HepG2 (cell line): ENCODE measurements at regions of chr17 and their contacts with region 1.

Region 1: DNA sequence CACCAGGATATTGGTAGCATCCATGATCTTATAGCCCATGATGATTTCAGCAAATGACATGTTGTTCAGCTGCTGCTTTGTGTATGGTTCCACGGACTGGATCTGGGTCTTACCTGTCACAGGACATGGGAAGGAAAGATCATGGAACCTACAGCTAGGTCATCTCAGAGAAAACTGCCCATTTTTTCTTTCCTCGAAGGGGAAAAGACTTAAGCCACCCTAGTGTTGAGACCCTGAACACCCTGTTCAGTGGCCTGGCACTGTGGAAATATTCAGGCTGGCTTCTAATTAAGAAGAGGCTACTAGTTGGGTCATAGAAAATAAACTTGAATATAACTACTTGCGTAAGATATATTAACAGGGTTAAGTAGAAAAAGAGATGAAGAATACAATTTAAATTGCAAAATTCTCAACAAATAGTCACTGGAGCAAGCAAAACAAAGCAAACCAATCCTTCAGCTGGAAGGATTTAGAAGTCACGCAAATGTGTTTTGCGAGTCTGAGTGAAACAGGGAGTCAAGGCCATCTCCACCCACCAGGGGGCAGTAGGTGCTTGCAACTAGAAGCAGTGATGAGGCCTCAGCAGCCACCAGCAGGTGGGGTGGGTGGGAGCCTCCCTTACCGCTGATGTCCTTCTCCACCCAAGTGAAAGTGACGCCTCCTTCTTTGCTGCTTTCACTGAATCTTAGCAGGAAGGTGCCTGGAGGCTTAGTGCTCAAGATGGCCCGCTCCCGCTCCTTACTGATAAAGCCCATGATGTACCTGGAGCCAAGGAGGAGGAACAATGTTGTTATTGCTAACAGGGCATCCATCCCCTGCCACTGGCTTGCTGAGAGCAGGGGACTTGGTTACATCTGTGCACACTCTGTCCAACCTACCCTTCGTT is 34.3 kb downstream of the STAT5A start:
- DNase-seq: peak; percentile 90
- ATAC-seq: peak; percentile 97
- H3K4me3 ChIP-seq: no peak overlapping the region
- H3K27ac ChIP-seq: no peak overlapping the region
- H3K4me1 ChIP-seq: peaks cover 6% of the 10 kb centered on the region
- H3K27me3 ChIP-seq: no peaks in the 10 kb centered on the region
- CTCF ChIP-seq: peak; percentile 100
- EP300 ChIP-seq: 0 out of 4 replicates have a peak, but pooled peaks of 1 of the 2 experiments have one; percentile 27
- POLR2A ChIP-seq: no peak
- RAD21 ChIP-seq: peak; percentile 100

Region 2: DNA sequence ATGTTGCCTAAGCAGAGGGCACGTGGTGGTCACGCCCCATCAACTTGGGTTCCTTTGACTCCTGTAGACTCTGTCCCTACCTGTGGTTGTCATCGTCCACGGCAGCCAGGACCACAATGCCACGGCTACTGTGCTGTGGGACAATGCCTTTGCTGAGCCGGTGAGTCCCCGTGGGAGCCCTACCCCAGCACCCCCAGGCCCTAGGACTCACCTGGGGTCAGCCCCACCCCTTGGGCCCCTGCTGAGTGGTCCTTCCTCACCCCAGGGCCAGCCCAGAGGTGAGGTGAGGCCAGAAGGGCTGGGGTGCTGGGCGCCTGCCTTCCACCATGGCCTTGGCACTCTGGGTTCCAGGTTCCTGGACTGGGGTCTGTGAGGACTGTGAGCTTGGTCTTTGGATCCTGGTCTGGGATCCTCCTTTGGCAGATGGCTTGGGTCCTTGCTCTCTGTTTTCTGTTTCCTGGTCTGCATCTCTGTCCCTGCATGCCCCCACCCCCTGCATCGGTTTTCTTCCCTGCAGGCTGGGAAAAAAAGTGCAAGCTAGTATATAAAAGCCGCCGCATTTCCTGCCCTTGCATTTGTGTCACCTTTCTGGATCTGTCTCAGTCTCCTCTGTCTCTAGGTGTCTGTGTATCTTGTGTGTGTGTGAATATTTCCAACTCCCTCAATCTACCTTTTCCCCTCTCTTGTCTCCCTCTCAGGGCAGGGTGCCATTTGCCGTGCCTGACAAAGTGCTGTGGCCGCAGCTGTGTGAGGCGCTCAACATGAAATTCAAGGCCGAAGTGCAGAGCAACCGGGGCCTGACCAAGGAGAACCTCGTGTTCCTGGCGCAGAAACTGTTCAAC is 16.9 kb before region 1 on chr17:
- CTCF ChIA-PET with region 1: no interaction called
- POLR2A ChIA-PET with region 1: no interaction called
- in situ Hi-C with region 1: no loop called
- intact Hi-C with region 1: no loop called
- DNase-seq: no peak
- ATAC-seq: no peak
- H3K4me3 ChIP-seq: no peak overlapping the region
- H3K27ac ChIP-seq: no peak overlapping the region
- H3K4me1 ChIP-seq: peaks cover 63% of the 10 kb centered on the region
- H3K27me3 ChIP-seq: no peaks in the 10 kb centered on the region
- CTCF ChIP-seq: no peak
- EP300 ChIP-seq: no peak
- POLR2A ChIP-seq: no peak
- RAD21 ChIP-seq: no peak

Region 3: GRCh38 chr17:42337442-42337841 is 14.8 kb after region 1 on chr17:
- CTCF ChIA-PET with region 1: no interaction called
- POLR2A ChIA-PET with region 1: no interaction called
- in situ Hi-C with region 1: no loop called
- intact Hi-C with region 1: no loop called
- DNase-seq: no peak
- ATAC-seq: no peak
- H3K4me3 ChIP-seq: no peak overlapping the region
- H3K27ac ChIP-seq: no peak overlapping the region
- H3K4me1 ChIP-seq: no peaks in the 10 kb centered on the region
- H3K27me3 ChIP-seq: no peaks in the 10 kb centered on the region
- CTCF ChIP-seq: no peak
- EP300 ChIP-seq: no peak
- POLR2A ChIP-seq: no peak
- RAD21 ChIP-seq: no peak

Region 4: DNA sequence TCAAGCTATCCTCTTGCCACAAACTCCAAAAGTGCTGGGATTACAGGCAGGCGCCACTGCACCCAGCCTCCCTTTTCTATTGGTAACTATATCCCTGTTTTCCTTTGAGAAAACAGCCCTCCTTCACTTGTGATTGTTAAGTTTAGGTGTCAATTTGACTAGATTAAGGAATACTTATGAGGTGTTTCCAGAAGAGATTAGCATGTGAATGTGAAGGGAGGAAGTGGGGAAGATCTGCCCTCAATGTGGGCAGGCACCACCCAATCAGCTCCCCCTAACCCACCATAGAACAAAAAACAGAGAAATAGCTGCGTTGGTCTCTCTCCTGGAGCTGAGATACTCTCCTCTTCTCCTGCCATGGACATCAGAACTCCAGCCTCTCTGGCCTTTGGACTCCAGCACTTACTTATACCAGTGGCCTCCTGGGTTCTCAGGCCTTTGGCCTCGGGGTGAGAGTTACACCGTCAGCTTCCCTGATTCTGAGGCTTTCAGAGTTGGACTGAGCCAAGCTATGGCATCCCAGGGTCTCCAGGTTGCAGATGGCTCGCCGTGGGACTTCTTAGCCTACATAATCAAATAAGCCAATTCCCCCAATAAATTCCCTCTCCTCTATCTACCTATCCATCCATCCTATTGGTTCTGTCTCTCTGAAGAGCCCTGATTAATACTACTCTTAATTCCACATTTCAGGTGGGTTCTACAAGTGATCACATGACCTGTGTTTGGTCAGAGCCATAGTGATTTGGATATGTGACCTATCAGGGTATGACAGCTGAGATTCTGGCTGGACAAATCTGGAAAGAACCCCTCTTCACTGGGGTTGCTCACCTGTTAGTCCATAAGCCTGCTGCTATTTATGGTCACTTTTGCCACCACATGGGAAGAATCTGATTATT is 77.6 kb after region 1 on chr17:
- CTCF ChIA-PET with region 1: interaction called, 163 read pairs
- POLR2A ChIA-PET with region 1: interaction called, 3 read pairs
- in situ Hi-C with region 1: loop called (anchors 5 kb)
- intact Hi-C with region 1: no loop called
- DNase-seq: no peak
- ATAC-seq: peak; percentile 71
- H3K4me3 ChIP-seq: no peak overlapping the region
- H3K27ac ChIP-seq: no peak overlapping the region
- H3K4me1 ChIP-seq: peaks cover 30% of the 10 kb centered on the region
- H3K27me3 ChIP-seq: no peaks in the 10 kb centered on the region
- CTCF ChIP-seq: no peak
- EP300 ChIP-seq: no peak
- POLR2A ChIP-seq: no peak
- RAD21 ChIP-seq: no peak

Region 5: DNA sequence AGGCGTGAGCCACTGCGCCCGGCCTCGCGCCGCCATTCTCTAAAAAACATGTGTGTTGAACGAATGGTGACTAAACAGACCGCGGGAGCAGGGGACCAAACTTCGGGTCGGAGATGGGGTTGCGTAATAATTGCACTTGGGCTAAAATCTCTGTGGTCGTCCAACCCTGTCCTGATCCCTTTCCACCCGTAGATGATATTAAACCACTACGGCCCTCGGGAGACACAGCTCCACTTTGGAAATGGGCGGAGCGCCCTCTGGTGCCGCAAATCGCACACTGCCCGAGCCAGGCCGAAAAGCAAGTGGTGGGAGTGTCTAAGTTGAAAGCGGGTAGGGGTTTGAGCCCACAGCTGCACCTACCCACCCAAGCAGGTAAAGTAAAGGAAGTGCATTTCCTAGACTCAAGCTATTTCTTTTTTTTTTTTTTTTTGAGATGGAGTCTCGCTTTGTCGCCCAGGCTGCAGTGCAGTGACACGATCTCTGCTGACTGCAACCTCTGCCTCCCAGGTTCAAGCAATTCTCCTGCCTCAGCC is 83.4 kb after region 1 on chr17:
- CTCF ChIA-PET with region 1: interaction called, 163 read pairs
- POLR2A ChIA-PET with region 1: interaction called, 3 read pairs
- in situ Hi-C with region 1: loop called (anchors 5 kb)
- intact Hi-C with region 1: loop called (anchors 1 kb)
- DNase-seq: peak; percentile 63
- ATAC-seq: peak; percentile 84
- H3K4me3 ChIP-seq: no peak overlapping the region
- H3K27ac ChIP-seq: no peak overlapping the region
- H3K4me1 ChIP-seq: 0 out of 2 replicates have a peak, but pooled peaks cover 8% of the 10 kb centered on the region
- H3K27me3 ChIP-seq: no peaks in the 10 kb centered on the region
- CTCF ChIP-seq: peak; percentile 98
- EP300 ChIP-seq: no peak
- POLR2A ChIP-seq: no peak
- RAD21 ChIP-seq: peak; percentile 98

Region 6: DNA sequence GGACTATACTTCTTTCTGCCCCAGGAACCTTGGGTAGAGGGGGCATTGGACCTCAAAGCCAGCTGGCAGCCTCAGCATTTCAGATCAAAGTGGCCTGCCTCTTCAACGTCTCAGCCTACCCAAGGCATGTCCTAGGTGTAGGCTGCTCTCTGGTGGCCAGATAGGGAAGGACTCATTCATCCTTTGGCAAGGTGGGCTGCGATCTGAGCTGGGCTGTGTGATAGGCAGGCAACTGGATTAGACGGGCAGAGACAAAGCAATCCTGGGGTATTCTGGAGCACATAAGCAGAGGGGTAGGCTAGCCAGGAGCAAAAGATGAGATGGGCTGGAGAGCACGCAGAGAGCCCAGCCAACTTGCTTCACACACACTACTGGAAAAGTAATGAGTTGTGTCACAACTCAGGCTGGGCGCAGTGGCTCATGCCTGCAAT is 204.7 kb after region 1 on chr17:
- CTCF ChIA-PET with region 1: interaction called, 37 read pairs
- POLR2A ChIA-PET with region 1: no interaction called
- in situ Hi-C with region 1: loop called (anchors 5 kb)
- intact Hi-C with region 1: loop called (anchors 1 kb)
- DNase-seq: peak; percentile 85
- ATAC-seq: peak; percentile 68
- H3K4me3 ChIP-seq: peak overlapping the region in 1 of 3 experiments; percentile 40; a peak in 2 of 6 replicates
- H3K27ac ChIP-seq: no peak overlapping the region
- H3K4me1 ChIP-seq: peaks cover 92% of the 10 kb centered on the region
- H3K27me3 ChIP-seq: no peaks in the 10 kb centered on the region
- CTCF ChIP-seq: peak; percentile 99
- EP300 ChIP-seq: no peak
- POLR2A ChIP-seq: no peak
- RAD21 ChIP-seq: peak; percentile 95